ENCODE measurements at regions of chr1 and their contacts with region 1.

Region 1: DNA sequence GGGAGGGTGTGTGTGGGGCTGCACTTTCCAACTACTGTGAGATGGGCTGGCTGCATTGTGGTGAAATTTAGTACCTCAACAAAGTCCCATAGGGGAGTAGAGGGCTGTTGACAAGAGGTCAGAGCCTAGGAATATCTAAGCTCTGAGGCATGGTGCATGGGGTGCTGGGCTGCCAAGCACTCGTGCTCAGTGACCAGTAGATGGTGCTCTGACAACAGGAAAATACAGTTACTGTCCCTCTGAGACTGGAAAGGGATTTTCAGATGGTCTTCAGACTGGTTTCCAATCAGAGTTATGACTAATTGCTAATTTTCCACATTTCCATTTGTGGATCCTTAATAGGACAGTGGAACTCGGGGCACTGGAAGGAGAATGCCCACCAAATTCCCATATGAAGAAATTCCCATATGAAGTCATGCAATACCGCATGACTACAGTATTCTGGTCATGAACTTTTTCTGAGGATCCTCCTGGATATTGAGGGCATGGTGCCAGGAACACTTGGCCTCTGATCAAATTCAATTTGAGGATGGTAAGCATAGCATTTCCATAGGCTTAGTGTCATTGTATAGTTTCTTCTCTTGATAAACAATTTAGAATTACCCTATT is 4.1 kb upstream of the CACNA1E start:
- DNase-seq: no peak
- ATAC-seq: peak; percentile 76
- H3K4me3 ChIP-seq: no peak overlapping the region
- H3K27ac ChIP-seq: no peak overlapping the region
- H3K4me1 ChIP-seq: no peaks in the 10 kb centered on the region
- H3K27me3 ChIP-seq: no peaks in the 10 kb centered on the region

Region 2: DNA sequence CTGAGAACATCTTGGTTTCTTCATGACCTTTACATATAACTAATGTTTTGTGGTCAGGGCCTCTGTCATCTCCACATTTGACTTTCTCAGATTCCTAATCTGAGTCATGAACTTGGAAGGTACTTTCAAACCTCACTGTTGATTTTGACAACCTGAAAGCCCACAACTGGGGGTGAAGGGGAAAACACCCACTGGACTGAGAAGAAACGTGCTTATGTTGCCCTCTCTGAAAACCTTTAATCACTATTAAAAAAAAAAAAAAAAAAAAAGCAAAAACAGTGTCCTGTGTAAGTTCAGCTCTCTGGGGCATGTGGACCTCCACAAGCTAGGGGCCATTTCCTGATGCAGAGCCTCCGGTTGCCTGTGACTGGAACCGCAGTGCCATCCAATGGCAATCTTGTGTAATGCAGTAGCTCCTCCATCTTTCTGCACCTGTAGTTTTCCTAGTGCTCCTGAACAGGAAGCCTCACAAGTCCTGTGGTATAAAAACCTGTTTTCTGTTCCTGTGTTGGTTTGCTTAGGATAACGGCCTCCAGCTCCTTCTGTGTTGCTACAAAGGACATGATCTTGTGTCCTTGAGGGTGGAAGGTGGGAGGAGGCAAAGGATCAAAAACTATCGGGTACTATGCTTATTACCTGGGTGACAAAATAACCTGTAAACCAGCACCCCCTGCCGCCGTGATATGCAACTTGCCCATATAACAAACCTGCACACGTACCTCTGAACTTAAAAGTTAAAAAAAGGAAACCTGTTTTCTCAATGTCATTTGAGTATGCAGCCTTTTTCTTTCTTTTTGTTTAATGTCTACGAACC is 457.7 kb after region 1 on chr1:
- intact Hi-C with region 1: loop called (anchors 2 to 10 kb)
- DNase-seq: no peak
- ATAC-seq: no peak
- H3K4me3 ChIP-seq: no peak overlapping the region
- H3K27ac ChIP-seq: no peak overlapping the region
- H3K4me1 ChIP-seq: no peaks in the 10 kb centered on the region
- H3K27me3 ChIP-seq: no peaks in the 10 kb centered on the region

Region 3: GRCh38 chr1:182054698-182055326 is 575.6 kb after region 1 on chr1:
- intact Hi-C with region 1: loop called (anchors 10 kb)
- DNase-seq: no peak
- ATAC-seq: no peak
- H3K4me3 ChIP-seq: no peak overlapping the region
- H3K27ac ChIP-seq: no peak overlapping the region
- H3K4me1 ChIP-seq: no peaks in the 10 kb centered on the region
- H3K27me3 ChIP-seq: no peaks in the 10 kb centered on the region

Measured in aorta (tissue), 5 donors.